ENCODE measurements at regions of chr7 and their contacts with region 1.

Region 1: GRCh38 chr7:120792091-120792860 is 65.7 kb downstream of the TSPAN12 start:
- DNase-seq: peak; percentile 65
- ATAC-seq: peak; percentile 100
- H3K4me3 ChIP-seq: no peak overlapping the region
- H3K27ac ChIP-seq: no peak overlapping the region
- H3K4me1 ChIP-seq: peaks cover 2 to 10% of the 10 kb centered on the region in 2 experiments; a peak in 3 of 4 replicates
- H3K27me3 ChIP-seq: no peaks in the 10 kb centered on the region
- CTCF ChIP-seq: peak; percentile 72 to 97 (median 97)
- POLR2A ChIP-seq: no peak
- RAD21 ChIP-seq: peak; percentile 56

Region 2: GRCh38 chr7:120504386-120504785 is 287.9 kb before region 1 on chr7:
- CTCF ChIA-PET with region 1: no interaction called
- POLR2A ChIA-PET with region 1: no interaction called
- RAD21 ChIA-PET with region 1: no interaction called
- intact Hi-C with region 1: no loop called
- DNase-seq: no peak
- ATAC-seq: no peak
- H3K4me3 ChIP-seq: no peak overlapping the region
- H3K27ac ChIP-seq: no peak overlapping the region
- H3K4me1 ChIP-seq: no peaks in the 10 kb centered on the region
- H3K27me3 ChIP-seq: no peaks in the 10 kb centered on the region
- CTCF ChIP-seq: no peak
- POLR2A ChIP-seq: no peak
- RAD21 ChIP-seq: no peak

Region 3: GRCh38 chr7:120805636-120806388 is 13.5 kb after region 1 on chr7:
- CTCF ChIA-PET with region 1: interaction called, 20 read pairs
- POLR2A ChIA-PET with region 1: no interaction called
- RAD21 ChIA-PET with region 1: no interaction called
- intact Hi-C with region 1: no loop called
- DNase-seq: peak; percentile 40
- ATAC-seq: peak; percentile 83
- H3K4me3 ChIP-seq: no peak overlapping the region
- H3K27ac ChIP-seq: no peak overlapping the region
- H3K4me1 ChIP-seq: no peaks in the 10 kb centered on the region
- H3K27me3 ChIP-seq: no peaks in the 10 kb centered on the region
- CTCF ChIP-seq: peak; percentile 65 to 85 (median 76)
- POLR2A ChIP-seq: no peak
- RAD21 ChIP-seq: peak; percentile 70

Region 4: DNA sequence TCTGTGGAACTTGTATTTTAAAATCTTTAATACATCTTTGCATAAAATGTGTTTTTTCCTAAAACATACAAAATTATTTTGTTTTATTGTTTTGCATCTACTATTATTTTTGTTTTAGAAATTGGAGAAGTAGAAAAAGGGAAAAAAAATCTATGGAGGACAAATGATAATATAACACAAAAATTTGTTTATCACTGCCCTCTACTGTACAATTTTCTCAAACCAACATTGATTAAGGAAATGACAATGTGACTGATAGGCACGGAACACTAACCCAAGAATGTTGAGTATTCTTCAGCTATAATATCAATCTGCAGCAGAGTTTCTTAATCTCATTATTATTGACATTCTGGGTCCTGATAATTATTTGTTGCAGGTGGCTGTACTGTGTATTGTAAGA is 148.8 kb after region 1 on chr7:
- CTCF ChIA-PET with region 1: interaction called, 9 read pairs
- POLR2A ChIA-PET with region 1: no interaction called
- RAD21 ChIA-PET with region 1: no interaction called
- intact Hi-C with region 1: loop called (anchors 1 kb)
- DNase-seq: peak; percentile 4
- ATAC-seq: peak; percentile 72
- H3K4me3 ChIP-seq: no peak overlapping the region
- H3K27ac ChIP-seq: no peak overlapping the region
- H3K4me1 ChIP-seq: no peaks in the 10 kb centered on the region
- H3K27me3 ChIP-seq: no peaks in the 10 kb centered on the region
- CTCF ChIP-seq: peak in 2 of 3 experiments; percentile 42 to 46; a peak in 3 of 6 replicates
- POLR2A ChIP-seq: no peak
- RAD21 ChIP-seq: peak; percentile 61

Region 5: DNA sequence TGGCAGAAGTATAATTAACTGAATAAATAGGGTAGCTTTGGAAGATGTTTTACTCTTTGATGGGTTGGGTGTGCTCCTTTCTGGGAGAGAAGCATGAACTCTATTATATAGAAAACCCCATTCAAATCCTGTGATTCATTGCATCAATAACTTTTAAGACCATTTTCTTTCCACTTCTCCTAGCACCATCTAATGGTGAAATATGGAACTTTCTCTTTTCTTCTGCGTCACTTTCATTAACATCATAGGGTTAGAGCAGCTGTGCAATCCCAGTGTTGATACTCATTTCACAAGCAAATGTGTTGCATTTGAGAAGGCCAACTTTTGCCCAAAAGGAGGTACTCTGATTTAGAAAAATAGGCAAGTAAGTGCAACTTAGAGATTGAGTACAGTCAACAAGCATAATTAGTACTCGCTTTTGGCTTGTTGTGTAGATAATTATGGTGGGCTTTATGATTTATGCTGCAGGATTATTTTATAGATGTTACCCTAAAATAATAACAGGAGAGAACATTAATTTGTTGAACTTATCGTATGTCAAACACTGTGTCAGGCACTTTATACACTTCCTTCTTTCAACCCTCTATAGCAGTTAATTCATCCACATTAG is 289.2 kb after region 1 on chr7:
- CTCF ChIA-PET with region 1: interaction called, 8 read pairs
- POLR2A ChIA-PET with region 1: no interaction called
- RAD21 ChIA-PET with region 1: no interaction called
- intact Hi-C with region 1: loop called (anchors 1 kb)
- DNase-seq: peak; percentile 44
- ATAC-seq: peak; percentile 60
- H3K4me3 ChIP-seq: no peak overlapping the region
- H3K27ac ChIP-seq: no peak overlapping the region
- H3K4me1 ChIP-seq: peaks cover 9 to 39% of the 10 kb centered on the region in 2 experiments
- H3K27me3 ChIP-seq: no peaks in the 10 kb centered on the region
- CTCF ChIP-seq: peak; percentile 49 to 70 (median 58); a peak in 5 of 6 replicates
- POLR2A ChIP-seq: no peak
- RAD21 ChIP-seq: peak; percentile 71

Region 6: GRCh38 chr7:121107923-121108498 is 315.7 kb after region 1 on chr7:
- CTCF ChIA-PET with region 1: interaction called, 12 read pairs
- POLR2A ChIA-PET with region 1: no interaction called
- RAD21 ChIA-PET with region 1: interaction called in 1 of 2 experiments, 3 read pairs
- intact Hi-C with region 1: loop called (anchors 5 kb)
- DNase-seq: peak; percentile 52
- ATAC-seq: peak; percentile 97
- H3K4me3 ChIP-seq: no peak overlapping the region
- H3K27ac ChIP-seq: no peak overlapping the region
- H3K4me1 ChIP-seq: peaks cover under 1 to 3% of the 10 kb centered on the region in 2 experiments; a peak in 2 of 4 replicates
- H3K27me3 ChIP-seq: no peaks in the 10 kb centered on the region
- CTCF ChIP-seq: peak; percentile 67 to 84 (median 77)
- POLR2A ChIP-seq: no peak
- RAD21 ChIP-seq: peak; percentile 85

Measured in HCT116 (cell line).